B cell (primary cell): ENCODE measurements at regions of chrX and their contacts with region 1.

Region 1: GRCh38 chrX:72181178-72182125 is at the start of gene PIN4:
- DNase-seq: peak; percentile 93
- ATAC-seq: peak; percentile 90
- H3K4me3 ChIP-seq: peak within 1 kb of the TSS; percentile 73 to 84 (median 80)
- H3K4me3 Mint-ChIP-seq: no peak within 1 kb of the TSS
- H3K27ac ChIP-seq: peak within 1 kb of the TSS; percentile 68 to 79
- H3K27ac Mint-ChIP-seq: no peak within 1 kb of the TSS
- H3K4me1 ChIP-seq: peaks cover 14 to 17% of the 10 kb centered on the region in 2 donors
- H3K4me1 Mint-ChIP-seq: peaks cover 15% of the 10 kb centered on the region
- H3K27me3 ChIP-seq: no peaks in the 10 kb centered on the region
- H3K27me3 Mint-ChIP-seq: no peaks in the 10 kb centered on the region
- CTCF ChIP-seq: no peak
- total RNA-seq, gene PIN4: 13.4 and 16.0 TPM in 2 replicates

Region 2: DNA sequence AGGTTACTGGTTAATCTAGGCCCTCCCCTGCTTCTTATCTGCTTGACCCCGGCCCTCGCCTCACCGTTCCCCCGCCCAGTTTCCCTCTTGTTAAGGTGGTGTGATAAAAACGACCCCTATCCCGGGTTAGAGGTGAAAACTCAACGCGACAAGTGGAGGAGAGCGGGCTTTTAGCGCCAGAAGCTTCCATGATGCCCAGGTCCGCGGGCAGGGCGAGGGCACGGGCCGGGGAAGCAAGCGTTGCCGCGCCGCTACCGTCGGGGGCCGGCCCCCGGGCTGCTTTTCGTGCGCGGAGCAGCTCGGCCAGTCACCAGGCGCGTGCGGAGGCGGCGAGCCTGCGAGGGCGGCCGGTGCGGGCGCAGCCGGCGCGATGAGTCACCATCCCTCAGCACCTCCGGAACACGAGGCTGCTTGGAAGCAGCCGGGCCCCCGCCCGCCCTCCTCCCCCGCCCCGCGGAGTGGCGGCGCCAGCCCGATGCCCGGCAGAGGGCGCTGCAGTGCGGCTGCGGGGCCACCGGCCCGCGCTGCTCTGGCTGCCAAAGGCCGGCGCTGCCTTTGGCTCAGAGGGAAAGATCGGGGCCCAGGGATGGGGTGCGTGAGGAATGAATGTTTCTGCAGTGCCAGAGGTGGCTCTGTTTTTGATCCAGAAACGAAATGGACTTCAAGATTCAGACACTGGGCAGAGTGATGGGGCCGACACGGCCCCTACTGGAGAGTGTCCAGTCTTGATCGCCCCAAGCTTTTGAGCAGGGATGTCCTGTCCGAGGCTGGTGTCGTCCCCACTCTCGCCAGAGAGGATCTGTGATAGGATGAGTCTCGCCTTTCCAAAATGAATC is 163.0 kb before region 1 on chrX:
- CTCF ChIA-PET with region 1: interaction called, 4 read pairs
- POLR2A ChIA-PET with region 1: no interaction called
- intact Hi-C with region 1: loop called (anchors 1 kb)
- DNase-seq: peak; percentile 78
- ATAC-seq: peak; percentile 82
- H3K4me3 ChIP-seq: peak overlapping the region in 2 of 5 experiments; percentile 11 to 20
- H3K4me3 Mint-ChIP-seq: peak overlapping the region; percentile 29
- H3K27ac ChIP-seq: no peak overlapping the region
- H3K27ac Mint-ChIP-seq: no peak overlapping the region
- H3K4me1 ChIP-seq: peaks cover 13 to 22% of the 10 kb centered on the region in 2 donors
- H3K4me1 Mint-ChIP-seq: peaks cover 9% of the 10 kb centered on the region
- H3K27me3 ChIP-seq: peaks cover 0 to 26% (median 19%) of the 10 kb centered on the region in 4 experiments
- H3K27me3 Mint-ChIP-seq: peaks cover 9% of the 10 kb centered on the region
- CTCF ChIP-seq: peak; percentile 76

Region 3: DNA sequence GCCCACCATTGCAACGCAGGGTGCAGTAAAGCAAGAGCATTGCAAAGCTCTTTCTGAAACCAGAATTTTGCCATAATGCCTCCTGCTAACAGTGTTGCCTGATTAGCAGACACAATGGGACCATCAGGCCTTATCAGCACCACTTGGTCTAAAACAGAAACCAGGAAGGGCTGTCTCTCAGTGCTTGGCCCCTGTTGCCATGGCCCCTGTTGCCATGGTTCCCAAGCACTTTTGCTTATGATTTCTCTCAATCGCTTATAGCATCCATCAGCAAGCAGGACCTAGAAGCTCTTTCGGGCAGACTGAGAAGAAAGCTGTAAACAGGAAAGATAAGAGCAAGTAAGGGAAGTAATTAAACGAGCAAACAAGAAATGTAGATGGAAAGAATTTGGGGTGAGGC is 86.6 kb before region 1 on chrX:
- CTCF ChIA-PET with region 1: no interaction called
- POLR2A ChIA-PET with region 1: no interaction called
- intact Hi-C with region 1: loop called (anchors 1 kb)
- DNase-seq: peak; percentile 87
- ATAC-seq: peak; percentile 90
- H3K4me3 ChIP-seq: no peak overlapping the region
- H3K4me3 Mint-ChIP-seq: peak overlapping the region; percentile 35
- H3K27ac ChIP-seq: peak overlapping the region; percentile 36 to 42
- H3K27ac Mint-ChIP-seq: peak overlapping the region; percentile 78
- H3K4me1 ChIP-seq: peaks cover 28 to 32% of the 10 kb centered on the region in 2 donors
- H3K4me1 Mint-ChIP-seq: peaks cover 34% of the 10 kb centered on the region
- H3K27me3 ChIP-seq: peaks cover 0 to 3% (median 0%) of the 10 kb centered on the region in 4 experiments
- H3K27me3 Mint-ChIP-seq: no peaks in the 10 kb centered on the region
- CTCF ChIP-seq: no peak

Region 4: GRCh38 chrX:72142094-72142793 is 39.2 kb before region 1 on chrX:
- CTCF ChIA-PET with region 1: no interaction called
- POLR2A ChIA-PET with region 1: interaction called, 5 read pairs
- intact Hi-C with region 1: loop called (anchors 1 kb)
- DNase-seq: peak; percentile 35
- ATAC-seq: peak; percentile 81
- H3K4me3 ChIP-seq: no peak overlapping the region
- H3K4me3 Mint-ChIP-seq: peak overlapping the region; percentile 31
- H3K27ac ChIP-seq: no peak overlapping the region
- H3K27ac Mint-ChIP-seq: peak overlapping the region; percentile 71
- H3K4me1 ChIP-seq: peaks cover 4 to 7% of the 10 kb centered on the region in 2 donors
- H3K4me1 Mint-ChIP-seq: peaks cover 19% of the 10 kb centered on the region
- H3K27me3 ChIP-seq: peaks cover 0 to 4% (median 0%) of the 10 kb centered on the region in 4 experiments
- H3K27me3 Mint-ChIP-seq: peaks cover 4% of the 10 kb centered on the region
- CTCF ChIP-seq: no peak

Region 5: GRCh38 chrX:72165551-72165950 is 15.9 kb before region 1 on chrX:
- CTCF ChIA-PET with region 1: no interaction called
- POLR2A ChIA-PET with region 1: no interaction called
- intact Hi-C with region 1: no loop called
- DNase-seq: no peak
- ATAC-seq: no peak
- H3K4me3 ChIP-seq: no peak overlapping the region
- H3K4me3 Mint-ChIP-seq: no peak overlapping the region
- H3K27ac ChIP-seq: no peak overlapping the region
- H3K27ac Mint-ChIP-seq: no peak overlapping the region
- H3K4me1 ChIP-seq: no peaks in the 10 kb centered on the region
- H3K4me1 Mint-ChIP-seq: peaks cover 4% of the 10 kb centered on the region
- H3K27me3 ChIP-seq: no peaks in the 10 kb centered on the region
- H3K27me3 Mint-ChIP-seq: peaks cover 5% of the 10 kb centered on the region
- CTCF ChIP-seq: no peak

Region 6: GRCh38 chrX:72238721-72239475 is 57.4 kb after region 1 on chrX and contains the start of gene ERCC6L:
- CTCF ChIA-PET with region 1: no interaction called
- POLR2A ChIA-PET with region 1: interaction called, 3 read pairs
- intact Hi-C with region 1: loop called (anchors 1 kb)
- DNase-seq: peak; percentile 85
- ATAC-seq: peak; percentile 99
- H3K4me3 ChIP-seq: peak within 1 kb of the TSS; percentile 16 to 59 (median 56)
- H3K4me3 Mint-ChIP-seq: peak within 1 kb of the TSS; percentile 92
- H3K27ac ChIP-seq: no peak within 1 kb of the TSS
- H3K27ac Mint-ChIP-seq: peak within 1 kb of the TSS; percentile 78
- H3K4me1 ChIP-seq: peaks cover 0 to 6% of the 10 kb centered on the region in 2 donors
- H3K4me1 Mint-ChIP-seq: peaks cover 6% of the 10 kb centered on the region
- H3K27me3 ChIP-seq: no peaks in the 10 kb centered on the region
- H3K27me3 Mint-ChIP-seq: no peaks in the 10 kb centered on the region
- CTCF ChIP-seq: no peak
- total RNA-seq, gene ERCC6L: 0.34 and 0.36 TPM in 2 replicates